ENCODE measurements at regions of chr11 and their contacts with region 1.

Region 1: GRCh38 chr11:5684646-5685362 is at the start of gene TRIM5:
- DNase-seq: peak; percentile 87
- CTCF ChIP-seq: peak; percentile 81

Region 2: GRCh38 chr11:5666391-5666770 is 18.4 kb before region 1 on chr11:
- CTCF ChIA-PET with region 1: interaction called, 11 read pairs
- POLR2A ChIA-PET with region 1: no interaction called
- DNase-seq: no peak
- CTCF ChIP-seq: no peak

Region 3: GRCh38 chr11:5753943-5754342 is 69.1 kb after region 1 on chr11 and contains the start of gene OR52N4:
- CTCF ChIA-PET with region 1: no interaction called
- POLR2A ChIA-PET with region 1: no interaction called
- DNase-seq: no peak
- CTCF ChIP-seq: no peak

Region 4: GRCh38 chr11:5878564-5878963 is 193.8 kb after region 1 on chr11:
- CTCF ChIA-PET with region 1: no interaction called
- POLR2A ChIA-PET with region 1: no interaction called
- DNase-seq: no peak
- CTCF ChIP-seq: no peak

Measured in GM10248 (cell line).